Uterus (tissue), 4 donors: ENCODE measurements at regions of chr11 and their contacts with region 1.

Region 1: GRCh38 chr11:75384438-75385080 is 14.8 kb upstream of the RPS3 start:
- DNase-seq: peak; percentile 66 to 80
- H3K4me3 ChIP-seq: no peak overlapping the region
- H3K27ac ChIP-seq: no peak overlapping the region
- H3K4me1 ChIP-seq: no peaks in the 10 kb centered on the region
- H3K27me3 ChIP-seq: no peaks in the 10 kb centered on the region
- CTCF ChIP-seq: peak; percentile 97 to 99 (median 98)
- POLR2A ChIP-seq: no peak

Region 2: DNA sequence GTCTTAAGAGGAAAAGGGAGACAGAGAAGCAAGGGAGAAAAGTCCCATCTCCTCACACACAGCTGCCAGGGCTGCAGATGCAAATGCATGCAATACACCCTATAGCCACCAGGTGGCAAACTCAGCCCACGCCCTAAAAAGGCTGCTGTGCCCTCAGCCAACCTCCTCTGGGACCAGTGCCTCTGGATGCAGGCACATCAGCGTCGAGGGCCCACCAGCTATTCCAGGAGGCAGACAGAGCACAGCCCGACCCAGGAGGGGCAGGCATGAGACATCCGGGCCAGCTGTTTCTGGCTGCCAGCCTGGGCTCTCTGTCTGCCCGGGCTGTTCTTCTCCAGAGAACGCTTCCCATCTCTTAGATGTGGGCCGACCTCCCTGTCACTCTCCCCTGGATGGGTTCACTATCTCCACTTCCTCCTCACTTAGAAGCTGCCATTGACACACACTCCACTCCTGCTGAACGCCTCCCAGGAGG is 104.3 kb before region 1 on chr11:
- intact Hi-C with region 1: loop called (anchors 2 kb)
- DNase-seq: peak; percentile 78 to 79
- H3K4me3 ChIP-seq: no peak overlapping the region
- H3K27ac ChIP-seq: no peak overlapping the region
- H3K4me1 ChIP-seq: peaks cover 0 to 4% of the 10 kb centered on the region in 2 donors
- H3K27me3 ChIP-seq: no peaks in the 10 kb centered on the region
- CTCF ChIP-seq: peak; percentile 95 to 99 (median 96)
- POLR2A ChIP-seq: no peak

Region 3: GRCh38 chr11:75499449-75500190 is 115.1 kb after region 1 on chr11:
- intact Hi-C with region 1: no loop called
- DNase-seq: peak; percentile 81 to 88
- H3K4me3 ChIP-seq: no peak overlapping the region
- H3K27ac ChIP-seq: peak overlapping the region; percentile 79 to 87
- H3K4me1 ChIP-seq: peaks cover 3 to 14% of the 10 kb centered on the region in 2 donors
- H3K27me3 ChIP-seq: no peaks in the 10 kb centered on the region
- CTCF ChIP-seq: no peak
- POLR2A ChIP-seq: no peak